CD4-positive, alpha-beta memory T cell (primary cell): ENCODE measurements at regions of chr7 and their contacts with region 1.

Region 1: GRCh38 chr7:135414850-135415439 is 95.0 kb downstream of the CNOT4 start:
- DNase-seq: peak; percentile 4 to 17 (median 5)
- H3K4me3 ChIP-seq: no peak overlapping the region
- H3K4me3 Mint-ChIP-seq: no peak overlapping the region
- H3K27ac ChIP-seq: no peak overlapping the region
- H3K27ac Mint-ChIP-seq: peak overlapping the region in 1 of 7 donors; percentile 19
- H3K4me1 ChIP-seq: no peaks in the 10 kb centered on the region
- H3K4me1 Mint-ChIP-seq: peaks cover 5 to 11% (median 7%) of the 10 kb centered on the region in 4 donors
- H3K27me3 ChIP-seq: no peaks in the 10 kb centered on the region
- H3K27me3 Mint-ChIP-seq: no peaks in the 10 kb centered on the region

Region 2: GRCh38 chr7:135260930-135261721 is 153.8 kb before region 1 on chr7:
- CTCF ChIA-PET with region 1: no interaction called
- POLR2A ChIA-PET with region 1: no interaction called
- intact Hi-C with region 1: no loop called
- DNase-seq: no peak
- H3K4me3 ChIP-seq: no peak overlapping the region
- H3K4me3 Mint-ChIP-seq: no peak overlapping the region
- H3K27ac ChIP-seq: no peak overlapping the region
- H3K27ac Mint-ChIP-seq: no peak overlapping the region
- H3K4me1 ChIP-seq: no peaks in the 10 kb centered on the region
- H3K4me1 Mint-ChIP-seq: no peaks in the 10 kb centered on the region
- H3K27me3 ChIP-seq: no peaks in the 10 kb centered on the region
- H3K27me3 Mint-ChIP-seq: peaks cover 5 to 6% of the 10 kb centered on the region in 2 donors

Region 3: DNA sequence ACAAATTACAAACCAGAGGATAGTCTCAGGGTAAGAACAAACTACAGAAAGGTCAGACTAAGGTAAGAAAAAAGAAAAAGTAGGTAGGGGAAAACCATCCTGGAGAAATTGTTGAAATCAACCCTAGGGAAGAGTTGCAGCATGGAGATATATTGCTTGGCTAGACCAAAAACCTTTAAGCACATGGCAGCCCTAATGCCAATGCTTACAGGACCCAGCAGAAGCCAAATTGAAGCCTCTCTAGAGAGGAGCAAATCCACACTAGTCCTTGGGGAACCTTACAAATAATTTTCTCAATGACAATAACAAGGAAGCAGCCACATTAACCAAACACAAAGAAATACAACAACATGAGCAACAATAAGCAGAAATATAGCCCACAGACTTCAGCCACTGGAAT is 13.1 kb after region 1 on chr7:
- CTCF ChIA-PET with region 1: interaction called, 8 read pairs
- POLR2A ChIA-PET with region 1: no interaction called
- intact Hi-C with region 1: loop called (anchors 2 kb)
- DNase-seq: no peak
- H3K4me3 ChIP-seq: no peak overlapping the region
- H3K4me3 Mint-ChIP-seq: no peak overlapping the region
- H3K27ac ChIP-seq: no peak overlapping the region
- H3K27ac Mint-ChIP-seq: peak overlapping the region in 1 of 7 donors; percentile 22
- H3K4me1 ChIP-seq: peaks cover 7% of the 10 kb centered on the region
- H3K4me1 Mint-ChIP-seq: peaks cover 43 to 63% (median 54%) of the 10 kb centered on the region in 4 donors
- H3K27me3 ChIP-seq: no peaks in the 10 kb centered on the region
- H3K27me3 Mint-ChIP-seq: no peaks in the 10 kb centered on the region

Region 4: DNA sequence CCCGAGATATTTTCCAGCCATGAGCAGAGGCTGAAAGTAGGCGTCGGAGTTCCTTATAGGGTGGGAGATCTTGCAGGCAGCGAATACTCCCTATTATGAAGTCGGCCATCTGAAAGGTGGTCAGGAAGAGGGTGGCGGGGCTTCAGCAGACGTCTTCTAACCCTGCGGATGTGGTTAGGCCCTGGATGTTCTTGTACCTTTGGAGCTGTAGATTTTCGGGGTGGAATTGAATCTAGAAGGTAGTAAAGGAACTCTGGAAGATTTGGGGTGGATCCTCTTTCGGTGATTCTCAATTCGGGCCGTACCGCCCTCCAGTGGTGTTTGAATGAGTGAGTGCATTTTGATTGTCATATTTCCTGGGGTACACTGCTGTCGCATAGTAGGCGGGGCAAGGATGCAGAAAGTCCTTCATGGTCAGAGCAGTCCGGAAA is 143.4 kb after region 1 on chr7:
- CTCF ChIA-PET with region 1: interaction called, 3 read pairs
- POLR2A ChIA-PET with region 1: no interaction called
- intact Hi-C with region 1: loop called (anchors 2 kb)
- DNase-seq: peak; percentile 68 to 80 (median 70)
- H3K4me3 ChIP-seq: peak overlapping the region; percentile 92 to 96
- H3K4me3 Mint-ChIP-seq: no peak overlapping the region
- H3K27ac ChIP-seq: peak overlapping the region; percentile 92
- H3K27ac Mint-ChIP-seq: no peak overlapping the region
- H3K4me1 ChIP-seq: peaks cover 24% of the 10 kb centered on the region
- H3K4me1 Mint-ChIP-seq: peaks cover 17 to 23% (median 19%) of the 10 kb centered on the region in 4 donors
- H3K27me3 ChIP-seq: no peaks in the 10 kb centered on the region
- H3K27me3 Mint-ChIP-seq: peaks cover 0 to 2% of the 10 kb centered on the region in 2 donors

Region 5: DNA sequence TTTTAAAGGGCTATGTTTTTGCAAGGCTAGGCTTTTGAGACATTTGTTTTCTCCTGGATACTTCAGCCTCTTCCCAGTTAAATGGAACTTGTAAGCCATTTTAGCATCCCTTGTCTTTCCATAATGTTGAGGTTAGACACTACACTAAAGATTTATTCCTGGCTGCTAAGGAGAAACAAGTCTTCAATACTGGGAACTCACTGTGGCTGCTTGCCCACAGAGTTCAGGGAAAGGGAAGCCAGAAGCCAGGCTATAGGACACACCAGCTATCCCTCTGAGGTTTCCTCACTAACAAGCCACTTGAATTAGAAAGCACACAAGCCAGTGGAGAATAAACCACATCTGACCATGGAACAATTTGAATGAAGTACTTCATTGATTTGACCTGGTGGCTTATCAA is 1031.8 kb after region 1 on chr7:
- CTCF ChIA-PET with region 1: no interaction called
- POLR2A ChIA-PET with region 1: no interaction called
- intact Hi-C with region 1: no loop called
- DNase-seq: no peak
- H3K4me3 ChIP-seq: no peak overlapping the region
- H3K4me3 Mint-ChIP-seq: no peak overlapping the region
- H3K27ac ChIP-seq: no peak overlapping the region
- H3K27ac Mint-ChIP-seq: no peak overlapping the region
- H3K4me1 ChIP-seq: no peaks in the 10 kb centered on the region
- H3K4me1 Mint-ChIP-seq: no peaks in the 10 kb centered on the region
- H3K27me3 ChIP-seq: no peaks in the 10 kb centered on the region
- H3K27me3 Mint-ChIP-seq: no peaks in the 10 kb centered on the region